PC-9 (cell line): ENCODE measurements at regions of chr4 and their contacts with region 1.

Region 1: DNA sequence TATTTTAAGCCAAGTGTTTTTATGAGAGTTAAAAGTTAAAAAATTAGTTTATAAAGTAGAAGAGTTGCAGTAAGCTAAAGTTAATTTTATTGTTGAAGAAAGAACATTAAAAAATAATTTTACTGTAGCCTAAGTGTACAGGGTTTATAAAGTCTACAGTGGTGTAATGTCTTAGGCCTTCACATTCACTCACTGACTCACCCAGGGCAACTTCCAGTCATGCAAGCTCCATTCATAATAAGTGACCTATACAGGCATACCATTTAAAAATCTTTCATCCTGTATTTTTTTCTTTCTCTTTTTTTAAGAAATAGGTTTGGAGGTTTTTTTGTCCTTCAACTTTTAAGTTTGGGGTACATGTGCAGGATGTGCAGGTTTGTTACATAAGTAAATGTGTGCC is 87.9 kb upstream of the NR3C2 start:
- DNase-seq: no peak
- H3K4me3 ChIP-seq: no peak overlapping the region
- H3K27ac ChIP-seq: no peak overlapping the region
- H3K4me1 ChIP-seq: no peaks in the 10 kb centered on the region
- H3K27me3 ChIP-seq: no peaks in the 10 kb centered on the region
- CTCF ChIP-seq: no peak

Region 2: GRCh38 chr4:149247164-149247563 is 717.0 kb after region 1 on chr4:
- CTCF ChIA-PET with region 1: no interaction called
- POLR2A ChIA-PET with region 1: interaction called, 14 read pairs
- intact Hi-C with region 1: no loop called
- DNase-seq: no peak
- H3K4me3 ChIP-seq: no peak overlapping the region
- H3K27ac ChIP-seq: no peak overlapping the region
- H3K4me1 ChIP-seq: no peaks in the 10 kb centered on the region
- H3K27me3 ChIP-seq: no peaks in the 10 kb centered on the region
- CTCF ChIP-seq: no peak